Vagina (tissue), 2 donors: ENCODE measurements at regions of chr4 and their contacts with region 1.

Region 1: GRCh38 chr4:124265701-124266100 is 446.8 kb downstream of the ANKRD50 start:
- DNase-seq: no peak
- H3K4me3 ChIP-seq: no peak overlapping the region
- H3K27ac ChIP-seq: no peak overlapping the region
- H3K4me1 ChIP-seq: peaks cover 6% of the 10 kb centered on the region
- H3K27me3 ChIP-seq: no peaks in the 10 kb centered on the region
- CTCF ChIP-seq: no peak
- POLR2A ChIP-seq: no peak

Region 2: DNA sequence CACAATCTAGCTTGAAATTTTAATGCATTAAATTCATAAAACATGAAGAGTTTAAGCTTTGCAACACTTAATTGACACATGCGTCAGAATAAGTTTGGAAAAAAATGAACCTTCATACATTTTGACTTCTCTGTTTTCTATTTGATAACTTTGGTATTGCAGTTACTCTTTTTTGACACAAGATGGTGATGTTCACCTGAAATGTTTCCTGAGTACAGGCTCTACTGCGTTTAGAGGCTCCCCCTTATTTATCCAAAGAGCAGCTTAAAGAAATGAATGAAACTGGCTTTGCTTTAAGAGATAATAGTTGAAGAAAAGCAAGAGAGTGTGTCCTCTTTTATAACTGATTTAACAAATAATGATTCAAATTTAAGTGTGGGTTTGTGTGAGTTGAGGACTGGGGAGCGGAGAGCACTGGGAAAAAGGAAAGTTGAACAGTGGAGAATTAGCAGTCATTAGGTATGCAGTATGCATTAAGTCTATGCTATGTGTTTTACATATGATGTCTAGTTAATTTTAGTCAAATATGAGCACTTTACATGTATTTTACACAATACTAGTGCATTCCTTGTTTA is 1162.7 kb before region 1 on chr4:
- intact Hi-C with region 1: loop called (anchors 5 kb)
- DNase-seq: no peak
- H3K4me3 ChIP-seq: no peak overlapping the region
- H3K27ac ChIP-seq: no peak overlapping the region
- H3K4me1 ChIP-seq: peaks cover 10% of the 10 kb centered on the region
- H3K27me3 ChIP-seq: no peaks in the 10 kb centered on the region
- CTCF ChIP-seq: peak in 2 of 3 experiments; percentile 41 to 70
- POLR2A ChIP-seq: no peak

Region 3: DNA sequence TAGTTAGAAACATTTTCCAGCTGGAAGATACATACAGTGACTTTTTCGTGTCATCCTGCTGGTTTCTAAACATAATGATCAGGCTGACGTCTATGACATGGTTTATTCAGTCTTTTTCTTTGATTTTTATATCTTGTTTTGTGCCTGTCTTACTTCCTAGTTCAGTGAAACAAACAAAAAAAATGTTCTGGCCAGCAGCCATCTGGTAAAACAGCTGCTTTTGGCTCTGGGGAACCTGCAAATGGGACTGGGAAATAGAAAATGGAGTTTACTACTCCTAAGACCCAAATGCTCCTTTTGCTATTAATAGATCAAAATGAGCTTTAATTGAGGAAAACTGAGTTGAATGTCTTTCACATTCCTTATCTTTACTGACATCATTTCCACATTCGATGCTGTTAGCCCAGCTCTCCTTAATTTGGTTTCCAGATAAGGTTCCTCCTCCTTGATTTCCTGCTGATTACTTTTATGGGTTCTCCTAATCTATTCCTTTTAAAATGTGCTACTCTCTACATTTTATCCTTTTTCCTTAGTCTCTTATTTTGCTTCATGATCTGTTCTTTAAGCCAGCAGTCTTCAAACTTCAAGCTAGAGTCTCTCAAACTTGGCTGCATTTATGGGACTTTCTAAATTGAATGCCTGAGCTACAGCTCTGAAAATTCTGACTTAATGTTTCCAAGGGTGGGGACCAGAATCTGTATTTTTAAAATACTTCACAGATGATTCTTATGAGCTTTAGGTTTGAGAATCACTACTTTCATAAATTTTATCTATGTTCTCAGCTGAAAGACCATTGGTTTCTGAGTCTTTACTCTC is 52.7 kb before region 1 on chr4:
- intact Hi-C with region 1: no loop called
- DNase-seq: no peak
- H3K4me3 ChIP-seq: no peak overlapping the region
- H3K27ac ChIP-seq: peak overlapping the region; percentile 2
- H3K4me1 ChIP-seq: peaks cover 18% of the 10 kb centered on the region
- H3K27me3 ChIP-seq: no peaks in the 10 kb centered on the region
- CTCF ChIP-seq: no peak
- POLR2A ChIP-seq: no peak

Region 4: DNA sequence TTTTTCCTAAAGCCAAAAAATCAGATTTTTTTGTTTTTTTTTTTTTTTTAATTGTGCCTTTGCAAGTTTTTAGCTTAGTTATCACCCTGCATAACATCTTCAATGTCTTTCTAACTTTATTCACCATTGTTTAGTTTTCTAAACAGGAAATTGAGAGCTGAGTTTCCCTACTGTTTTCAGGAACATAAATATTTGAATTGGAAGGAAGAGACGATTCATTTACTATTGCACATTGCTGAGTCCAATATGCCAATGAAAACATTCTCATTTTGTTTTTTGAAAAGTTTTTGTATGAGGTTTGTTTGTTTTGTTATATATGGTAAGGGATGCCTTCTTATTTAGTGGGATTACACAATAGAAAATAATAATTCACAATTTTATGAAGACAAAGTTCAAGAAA is 298.4 kb after region 1 on chr4:
- intact Hi-C with region 1: no loop called
- DNase-seq: no peak
- H3K4me3 ChIP-seq: no peak overlapping the region
- H3K27ac ChIP-seq: no peak overlapping the region
- H3K4me1 ChIP-seq: no peaks in the 10 kb centered on the region
- H3K27me3 ChIP-seq: no peaks in the 10 kb centered on the region
- CTCF ChIP-seq: no peak
- POLR2A ChIP-seq: no peak